IMR-90 (cell line): ENCODE measurements at regions of chr4 and their contacts with region 1.

Region 1: DNA sequence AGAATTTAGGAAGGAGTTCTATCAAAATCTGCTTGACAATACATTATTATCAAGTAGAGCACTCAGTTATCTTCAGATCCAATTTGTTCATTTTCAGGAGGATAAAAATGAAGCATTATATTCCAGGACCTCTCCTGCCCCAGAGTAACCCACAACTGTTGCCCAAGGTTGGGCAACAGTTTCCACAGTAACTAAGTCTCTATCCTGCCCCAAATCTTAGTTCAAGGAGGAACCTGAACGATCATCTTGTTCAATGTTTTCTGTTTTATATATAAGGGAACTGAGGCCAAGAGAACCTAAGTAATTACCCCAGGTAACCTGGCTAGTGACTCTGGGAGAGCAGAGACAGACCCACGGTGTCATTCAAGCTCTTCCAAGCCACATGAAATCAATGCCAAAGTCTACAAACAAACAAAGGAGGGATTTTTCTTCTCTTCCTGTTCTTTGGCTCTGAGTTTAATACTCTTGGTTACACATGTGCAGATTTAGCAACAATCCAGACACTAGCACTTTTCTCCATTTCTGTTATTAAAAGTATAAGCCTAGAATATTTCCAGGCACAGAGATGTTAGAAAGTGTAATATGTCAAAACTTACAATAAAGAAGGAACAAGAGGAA is 105.6 kb downstream of the C4orf51 start:
- DNase-seq: no peak
- ATAC-seq: no peak
- H3K4me3 ChIP-seq: no peak overlapping the region
- H3K27ac ChIP-seq: no peak overlapping the region
- H3K4me1 ChIP-seq: peaks cover 3% of the 10 kb centered on the region; the same call in 1 of the 2 replicates
- H3K27me3 ChIP-seq: no peaks in the 10 kb centered on the region
- CTCF ChIP-seq: no peak
- POLR2A ChIP-seq: no peak
- RAD21 ChIP-seq: no peak

Region 2: GRCh38 chr4:145755802-145756201 is 29.7 kb before region 1 on chr4:
- CTCF ChIA-PET with region 1: no interaction called
- POLR2A ChIA-PET with region 1: no interaction called
- dilution Hi-C with region 1: no loop called
- in situ Hi-C with region 1: no loop called
- intact Hi-C with region 1: loop called (anchors 5 kb)
- DNase-seq: peak; percentile 21
- ATAC-seq: no peak
- H3K4me3 ChIP-seq: no peak overlapping the region
- H3K27ac ChIP-seq: no peak overlapping the region
- H3K4me1 ChIP-seq: no peaks in the 10 kb centered on the region
- H3K27me3 ChIP-seq: no peaks in the 10 kb centered on the region
- CTCF ChIP-seq: no peak
- POLR2A ChIP-seq: no peak
- RAD21 ChIP-seq: no peak

Region 3: DNA sequence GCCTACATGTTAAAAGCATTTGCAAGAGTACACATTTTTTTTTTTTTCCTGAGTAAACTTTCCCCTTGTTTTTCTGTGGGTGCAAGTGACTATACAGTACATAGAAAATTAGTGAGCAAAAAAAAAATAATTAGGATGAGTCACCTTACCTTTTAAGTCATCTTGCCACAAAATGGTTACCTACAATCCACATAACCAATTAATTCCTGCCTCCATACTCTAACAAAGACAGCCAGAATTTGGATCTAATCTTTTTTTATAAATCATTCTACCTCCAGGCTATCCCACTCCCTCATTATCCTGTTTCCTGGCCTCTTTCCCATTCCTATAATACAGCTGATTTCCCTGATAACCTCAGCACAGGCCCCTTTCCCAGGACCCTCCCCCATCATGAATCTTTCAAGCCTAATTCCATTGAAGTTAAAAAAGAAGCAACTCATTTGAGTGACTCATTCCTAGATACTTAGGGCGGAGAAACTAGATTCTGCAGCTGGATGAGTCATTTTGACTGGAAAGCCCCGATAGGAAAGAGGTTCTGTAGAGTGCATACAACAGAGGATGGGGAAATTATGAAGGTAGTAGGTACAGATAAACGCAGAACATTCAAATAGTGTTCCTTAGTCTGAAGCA is 22.6 kb after region 1 on chr4:
- CTCF ChIA-PET with region 1: no interaction called
- POLR2A ChIA-PET with region 1: interaction called, 24 read pairs
- dilution Hi-C with region 1: no loop called
- in situ Hi-C with region 1: no loop called
- intact Hi-C with region 1: no loop called
- DNase-seq: peak; percentile 98
- ATAC-seq: peak; percentile 79
- H3K4me3 ChIP-seq: no peak overlapping the region
- H3K27ac ChIP-seq: peak overlapping the region; percentile 85
- H3K4me1 ChIP-seq: peaks cover 8% of the 10 kb centered on the region
- H3K27me3 ChIP-seq: no peaks in the 10 kb centered on the region
- CTCF ChIP-seq: no peak
- POLR2A ChIP-seq: no peak
- RAD21 ChIP-seq: no peak